Thyroid gland (tissue), 4 donors: ENCODE measurements at regions of chr20 and their contacts with region 1.

Region 1: DNA sequence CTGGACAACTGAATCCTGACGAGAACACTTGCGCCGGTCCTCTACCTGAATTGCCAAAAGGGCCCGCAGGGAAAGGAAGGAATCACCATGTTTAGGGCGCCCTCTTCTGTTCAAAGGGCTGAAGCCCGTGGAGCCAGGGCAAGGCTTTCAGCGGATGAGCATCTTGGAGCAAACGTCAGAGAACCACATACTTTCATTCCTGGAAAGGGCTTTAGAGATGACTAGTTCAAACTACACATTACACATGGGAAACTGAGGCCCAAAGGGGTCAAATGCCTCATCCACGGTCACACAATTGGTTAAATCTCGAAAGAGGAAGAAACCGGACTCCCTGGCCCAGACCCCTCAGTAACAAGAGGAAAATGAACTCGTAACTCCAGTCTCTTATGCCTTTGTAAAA is 11.5 kb upstream of the ZNF133 start:
- DNase-seq: peak; percentile 79 to 83
- H3K4me3 ChIP-seq: no peak overlapping the region
- H3K27ac ChIP-seq: no peak overlapping the region
- H3K4me1 ChIP-seq: no peaks in the 10 kb centered on the region
- H3K27me3 ChIP-seq: no peaks in the 10 kb centered on the region
- CTCF ChIP-seq: peak in 5 of 6 experiments; percentile 60 to 84 (median 76)
- POLR2A ChIP-seq: no peak

Region 2: DNA sequence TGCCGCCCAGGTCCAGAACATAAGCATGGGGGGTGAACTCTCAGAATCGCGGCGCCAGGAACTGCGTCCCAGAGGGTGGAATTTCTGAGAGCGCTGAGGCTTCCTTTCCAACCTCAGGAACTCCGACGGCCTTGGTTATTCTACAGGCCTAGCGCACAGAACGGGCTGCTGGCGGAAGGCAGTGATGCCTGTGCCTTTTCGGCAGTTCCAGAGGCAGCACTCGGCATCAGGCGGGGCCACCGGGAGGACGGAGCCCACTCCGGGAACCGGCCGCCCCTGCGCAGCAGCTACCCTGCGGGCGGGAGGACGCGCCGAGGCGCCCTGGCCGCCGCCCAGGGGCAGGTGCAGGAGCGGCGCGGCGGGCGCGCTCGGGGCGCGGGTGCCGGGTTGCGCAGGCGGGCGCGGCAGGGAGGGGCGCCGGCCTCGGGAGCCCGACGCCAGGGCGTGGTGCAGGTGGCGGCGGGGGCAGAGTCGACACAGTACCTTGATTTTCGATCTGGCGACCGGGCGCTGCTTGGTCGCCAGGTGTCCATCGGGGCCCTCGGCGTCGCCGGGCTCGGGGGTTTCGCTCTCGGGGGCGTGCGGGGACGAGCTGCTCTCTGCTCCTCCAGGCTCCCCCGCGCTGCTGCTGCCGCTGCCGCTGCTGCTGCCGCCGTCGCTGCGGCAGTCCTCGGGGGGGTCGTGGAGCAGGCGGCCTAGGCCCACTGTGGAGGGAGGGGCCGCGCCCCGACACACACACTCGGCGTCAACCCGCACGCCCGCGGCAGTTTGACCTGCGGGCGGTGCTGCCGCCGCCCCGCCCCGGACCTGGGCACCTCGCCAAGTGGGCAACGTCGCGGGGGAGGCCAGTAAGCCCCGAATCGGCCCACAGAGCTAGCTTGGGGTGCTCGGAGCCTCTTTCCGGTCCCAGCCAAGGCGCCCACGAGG is 220.4 kb before region 1 on chr20:
- intact Hi-C with region 1: loop called (anchors 10 kb)
- DNase-seq: peak; percentile 50 to 60
- H3K4me3 ChIP-seq: peak overlapping the region; percentile 27 to 63 (median 43)
- H3K27ac ChIP-seq: peak overlapping the region in 2 of 3 donors; percentile 74 to 79
- H3K4me1 ChIP-seq: peaks cover 8 to 18% of the 10 kb centered on the region in 2 donors
- H3K27me3 ChIP-seq: no peaks in the 10 kb centered on the region
- CTCF ChIP-seq: no peak
- POLR2A ChIP-seq: peak; percentile 18 to 38

Region 3: GRCh38 chr20:18144541-18145099 is 132.2 kb before region 1 on chr20:
- intact Hi-C with region 1: loop called (anchors 10 kb)
- DNase-seq: no peak
- H3K4me3 ChIP-seq: no peak overlapping the region
- H3K27ac ChIP-seq: no peak overlapping the region
- H3K4me1 ChIP-seq: peaks cover 0 to 6% of the 10 kb centered on the region in 2 donors
- H3K27me3 ChIP-seq: no peaks in the 10 kb centered on the region
- CTCF ChIP-seq: no peak
- POLR2A ChIP-seq: no peak